Common myeloid progenitor, CD34-positive (primary cell): ENCODE measurements at regions of chr20 and their contacts with region 1.

Region 1: GRCh38 chr20:34522969-34523871 is 7.0 kb downstream of the DYNLRB1 start:
- DNase-seq: peak; percentile 58 to 79 (median 76)
- H3K4me3 ChIP-seq: peak overlapping the region in 1 of 7 experiments; percentile 42
- H3K27ac ChIP-seq: no peak overlapping the region
- H3K4me1 ChIP-seq: peaks cover 0 to 6% (median 3%) of the 10 kb centered on the region in 4 experiments
- H3K27me3 ChIP-seq: no peaks in the 10 kb centered on the region

Region 2: DNA sequence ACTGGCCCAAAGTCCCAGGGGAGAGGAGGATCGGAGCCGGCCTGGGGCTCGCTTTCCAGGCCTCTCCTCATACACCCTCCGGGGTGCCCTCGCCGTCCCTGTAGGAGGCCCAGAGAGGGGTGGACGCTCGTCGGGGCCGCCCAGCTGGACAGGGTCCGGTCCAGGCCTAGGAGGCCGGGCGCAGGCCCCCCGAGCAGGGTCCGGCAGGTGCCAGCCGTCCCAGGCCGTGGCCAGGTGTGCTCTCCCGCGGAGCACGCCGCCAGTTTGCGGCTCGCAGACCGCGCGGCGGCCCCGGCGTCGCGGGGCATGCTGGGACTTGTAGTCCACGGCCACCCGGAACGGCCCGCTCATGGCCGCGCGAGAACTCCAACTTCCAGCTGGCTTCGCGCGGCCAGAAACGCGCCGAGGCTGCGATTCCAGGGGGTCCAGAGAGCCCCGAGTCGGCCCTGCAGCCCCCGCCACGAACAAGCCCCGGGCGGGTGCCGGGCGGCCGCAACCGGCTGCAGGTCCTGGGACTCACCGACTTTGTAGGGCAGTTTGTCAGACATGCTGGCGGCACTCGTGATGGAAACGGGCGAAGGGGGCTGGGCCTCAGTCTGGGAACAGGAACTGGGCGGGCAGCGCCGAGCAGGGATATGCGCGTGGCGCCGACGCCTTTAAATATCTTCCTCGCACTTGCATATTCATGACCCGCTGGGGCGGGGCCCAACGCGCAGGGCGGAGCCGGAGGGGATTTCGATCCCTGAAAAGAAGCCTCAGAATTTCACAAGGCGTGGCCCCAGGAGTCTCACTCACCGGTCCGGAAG is 220.3 kb before region 1 on chr20 and contains the start of gene AHCY:
- CTCF ChIA-PET with region 1: interaction called, 11 read pairs
- POLR2A ChIA-PET with region 1: no interaction called
- DNase-seq: peak; percentile 95 to 97 (median 96)
- H3K4me3 ChIP-seq: peak within 1 kb of the TSS; percentile 64 to 90 (median 78)
- H3K27ac ChIP-seq: peak within 1 kb of the TSS; percentile 77 to 86
- H3K4me1 ChIP-seq: peaks cover 7 to 22% (median 13%) of the 10 kb centered on the region in 4 experiments
- H3K27me3 ChIP-seq: no peaks in the 10 kb centered on the region

Region 3: GRCh38 chr20:34558320-34559218 is 35.3 kb after region 1 on chr20 and contains the start of gene MAP1LC3A:
- CTCF ChIA-PET with region 1: no interaction called
- POLR2A ChIA-PET with region 1: no interaction called
- DNase-seq: peak; percentile 96 to 97 (median 97)
- H3K4me3 ChIP-seq: peak within 1 kb of the TSS; percentile 55 to 85 (median 74)
- H3K27ac ChIP-seq: peak within 1 kb of the TSS; percentile 50 to 81
- H3K4me1 ChIP-seq: peaks cover 3 to 9% (median 7%) of the 10 kb centered on the region in 4 experiments
- H3K27me3 ChIP-seq: no peaks in the 10 kb centered on the region